Heart right ventricle (tissue), 16 donors: ENCODE measurements at regions of chr6 and their contacts with region 1.

Region 1: GRCh38 chr6:17584241-17584803 is 15.8 kb upstream of the FAM8A1 start:
- DNase-seq: peak in 1 of 2 donors; percentile 53
- ATAC-seq: peak; percentile 71 to 93 (median 90)
- H3K4me3 ChIP-seq: peak overlapping the region in 7 of 10 donors; percentile 17 to 41 (median 20)
- H3K27ac ChIP-seq: peak overlapping the region; percentile 5 to 80 (median 58)
- H3K4me1 ChIP-seq: peaks cover 0 to 19% (median 8%) of the 10 kb centered on the region in 9 donors
- H3K27me3 ChIP-seq: peaks cover 0 to 20% (median 0%) of the 10 kb centered on the region in 7 donors
- CTCF ChIP-seq: peak; percentile 48 to 90 (median 81)

Region 2: DNA sequence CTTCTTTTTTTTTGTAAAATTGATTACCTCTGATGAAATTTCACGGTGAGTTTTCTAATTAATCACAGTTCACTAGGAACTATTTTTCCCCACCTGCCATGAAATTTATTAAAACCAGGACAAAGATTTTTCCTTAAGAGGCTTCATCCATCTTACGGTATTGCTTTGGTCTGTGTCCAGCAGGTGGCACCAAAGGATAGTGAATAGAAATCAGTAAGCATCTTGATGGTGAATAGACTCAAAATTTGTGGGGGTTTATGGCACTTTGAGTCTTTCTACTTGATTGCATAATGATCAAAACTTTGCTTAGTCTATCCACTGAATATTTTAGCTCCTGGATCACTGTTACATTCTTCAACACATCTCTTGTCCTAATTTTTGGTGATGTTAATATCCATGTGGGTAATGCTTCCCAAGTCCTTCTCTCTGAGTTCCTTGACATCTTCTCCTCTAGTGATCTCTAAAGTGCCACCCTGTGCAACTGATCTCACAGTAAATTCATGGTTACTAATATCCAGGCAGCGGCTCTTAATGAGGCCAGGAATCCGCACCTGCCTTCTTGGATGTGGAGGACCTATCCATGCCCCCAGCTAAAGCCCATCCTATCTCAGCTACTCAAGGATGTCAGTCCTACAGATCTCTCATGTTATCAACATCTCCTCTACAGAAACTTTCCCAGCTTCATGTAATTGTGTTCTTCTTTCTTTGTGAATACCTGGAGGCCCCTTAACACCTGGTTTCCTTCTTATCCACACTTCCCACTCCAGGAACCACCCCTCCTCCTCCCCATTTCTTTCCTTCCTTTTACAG is 428.0 kb before region 1 on chr6:
- intact Hi-C with region 1: loop called (anchors 1 to 5 kb)
- DNase-seq: peak in 1 of 2 donors; percentile 74
- ATAC-seq: peak in 4 of 8 donors; percentile 47 to 76 (median 51)
- H3K4me3 ChIP-seq: no peak overlapping the region
- H3K27ac ChIP-seq: no peak overlapping the region
- H3K4me1 ChIP-seq: no peaks in the 10 kb centered on the region
- H3K27me3 ChIP-seq: peaks cover 0 to 10% (median 0%) of the 10 kb centered on the region in 7 donors
- CTCF ChIP-seq: peak; percentile 71 to 92 (median 84)

Region 3: DNA sequence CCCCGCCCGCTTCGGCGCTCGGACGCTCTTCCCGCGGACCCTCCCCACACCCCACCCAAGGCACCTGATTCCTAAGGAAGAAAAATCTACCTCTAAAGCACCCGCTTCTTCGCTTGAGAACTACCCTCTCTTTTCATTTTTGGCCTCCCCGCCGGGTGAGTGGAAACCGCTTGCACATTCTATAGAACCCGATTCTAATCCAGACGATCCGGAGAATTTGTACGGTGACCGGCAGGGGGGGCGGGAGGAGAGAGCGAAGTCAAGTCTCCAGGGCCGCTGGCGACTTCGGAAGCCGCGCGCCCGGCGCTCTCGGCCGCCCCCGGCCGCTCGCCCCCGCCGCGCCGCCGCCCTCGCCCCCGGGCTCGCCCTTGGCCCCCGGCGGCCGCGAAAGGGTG is 303.2 kb before region 1 on chr6 and contains the start of gene RBM24:
- intact Hi-C with region 1: loop called in 6 of 10 experiments (anchors 2 to 10 kb)
- DNase-seq: peak; percentile 52 to 55
- ATAC-seq: peak in 3 of 8 donors; percentile 5 to 26 (median 23)
- H3K4me3 ChIP-seq: peak within 1 kb of the TSS; percentile 56 to 85 (median 82)
- H3K27ac ChIP-seq: peak within 1 kb of the TSS; percentile 79 to 96 (median 90)
- H3K4me1 ChIP-seq: peaks cover 0 to 15% (median 5%) of the 10 kb centered on the region in 9 donors
- H3K27me3 ChIP-seq: peaks cover 0 to 59% (median 3%) of the 10 kb centered on the region in 7 donors
- CTCF ChIP-seq: peak in 4 of 9 donors; percentile 20 to 39 (median 26)
- total RNA-seq, gene RBM24: 149 to 317 (median 194) TPM

Region 4: GRCh38 chr6:17289630-17290061 is 294.7 kb before region 1 on chr6:
- intact Hi-C with region 1: loop called in 5 of 10 experiments (anchors 5 to 10 kb)
- DNase-seq: peak; percentile 51 to 79
- ATAC-seq: peak; percentile 79 to 95 (median 89)
- H3K4me3 ChIP-seq: peak overlapping the region in 8 of 10 donors; percentile 2 to 44 (median 32)
- H3K27ac ChIP-seq: peak overlapping the region; percentile 58 to 94 (median 82)
- H3K4me1 ChIP-seq: peaks cover 0 to 62% (median 6%) of the 10 kb centered on the region in 9 donors
- H3K27me3 ChIP-seq: peaks cover 0 to 11% (median 0%) of the 10 kb centered on the region in 7 donors
- CTCF ChIP-seq: no peak

Region 5: GRCh38 chr6:17469006-17469832 is 115.1 kb before region 1 on chr6:
- intact Hi-C with region 1: loop called in 1 of 10 experiments (anchors 5 kb)
- DNase-seq: no peak
- ATAC-seq: no peak
- H3K4me3 ChIP-seq: no peak overlapping the region
- H3K27ac ChIP-seq: no peak overlapping the region
- H3K4me1 ChIP-seq: peaks cover 0 to 31% (median 11%) of the 10 kb centered on the region in 9 donors
- H3K27me3 ChIP-seq: no peaks in the 10 kb centered on the region
- CTCF ChIP-seq: peak in 7 of 9 donors; percentile 16 to 49 (median 38)

Region 6: GRCh38 chr6:17808609-17809008 is 224.3 kb after region 1 on chr6:
- intact Hi-C with region 1: loop called in 7 of 10 experiments (anchors 10 kb)
- DNase-seq: no peak
- ATAC-seq: no peak
- H3K4me3 ChIP-seq: no peak overlapping the region
- H3K27ac ChIP-seq: no peak overlapping the region
- H3K4me1 ChIP-seq: peaks cover 0 to 4% (median 0%) of the 10 kb centered on the region in 9 donors
- H3K27me3 ChIP-seq: no peaks in the 10 kb centered on the region
- CTCF ChIP-seq: no peak

Region 7: DNA sequence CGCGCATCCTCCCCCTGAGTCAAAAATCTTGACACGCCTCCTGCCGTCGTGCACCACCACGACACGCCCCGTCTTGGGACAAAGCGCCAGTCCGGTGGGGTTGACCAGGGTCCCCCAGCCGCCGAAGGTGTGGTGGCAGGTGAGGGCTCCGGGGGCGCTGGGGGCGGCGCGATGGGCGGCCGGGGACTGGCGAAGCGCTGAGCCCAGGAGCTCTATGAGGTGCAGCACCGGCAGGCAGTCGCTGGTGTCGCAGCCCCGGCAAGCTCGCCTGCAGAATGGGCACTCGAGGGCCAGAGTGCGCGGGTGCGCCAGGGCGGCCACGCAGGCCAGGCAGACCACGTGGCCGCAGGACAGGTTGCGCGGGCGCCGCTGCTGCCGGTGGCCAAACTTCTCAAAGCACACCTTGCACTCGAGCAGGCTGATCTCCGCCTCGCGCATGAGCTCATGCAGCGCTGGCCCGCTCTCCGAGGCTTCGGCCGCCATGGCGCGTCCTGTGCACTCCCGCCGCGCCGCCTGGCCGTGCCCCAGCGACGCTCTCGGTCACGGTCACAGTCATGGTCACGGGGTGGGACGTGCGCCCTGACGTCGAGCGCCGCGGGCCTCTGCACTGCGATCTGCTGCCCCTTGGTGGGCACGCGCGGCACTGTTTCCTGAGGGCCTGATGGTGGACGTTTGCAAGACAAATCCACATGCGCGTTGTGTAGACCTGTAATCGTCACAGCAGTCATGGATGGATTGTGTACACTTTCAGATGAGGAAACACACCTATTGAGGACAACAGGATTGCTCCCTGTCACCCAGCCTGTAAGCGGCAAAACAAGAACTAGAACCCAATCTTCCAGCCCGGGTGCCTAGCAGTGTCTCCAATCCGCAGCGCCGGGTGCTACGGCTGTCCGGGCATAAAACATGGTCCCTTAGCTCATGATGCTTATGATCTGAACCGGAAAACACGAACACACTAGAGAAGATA is 538.1 kb after region 1 on chr6 and contains the start of gene NHLRC1:
- intact Hi-C with region 1: loop called in 1 of 10 experiments (anchors 10 kb)
- DNase-seq: peak; percentile 87 to 90
- ATAC-seq: peak; percentile 99 to 100 (median 99)
- H3K4me3 ChIP-seq: peak within 1 kb of the TSS; percentile 27 to 68 (median 61)
- H3K27ac ChIP-seq: peak within 1 kb of the TSS in 8 of 10 donors; percentile 18 to 64 (median 40)
- H3K4me1 ChIP-seq: peaks cover 3 to 21% (median 15%) of the 10 kb centered on the region in 9 donors
- H3K27me3 ChIP-seq: no peaks in the 10 kb centered on the region
- CTCF ChIP-seq: peak; percentile 86 to 96 (median 93)
- total RNA-seq, gene NHLRC1: 0.92 to 2.5 (median 1.6) TPM